Posterior vena cava (tissue), 2 donors: ENCODE measurements at regions of chr1 and their contacts with region 1.

Region 1: DNA sequence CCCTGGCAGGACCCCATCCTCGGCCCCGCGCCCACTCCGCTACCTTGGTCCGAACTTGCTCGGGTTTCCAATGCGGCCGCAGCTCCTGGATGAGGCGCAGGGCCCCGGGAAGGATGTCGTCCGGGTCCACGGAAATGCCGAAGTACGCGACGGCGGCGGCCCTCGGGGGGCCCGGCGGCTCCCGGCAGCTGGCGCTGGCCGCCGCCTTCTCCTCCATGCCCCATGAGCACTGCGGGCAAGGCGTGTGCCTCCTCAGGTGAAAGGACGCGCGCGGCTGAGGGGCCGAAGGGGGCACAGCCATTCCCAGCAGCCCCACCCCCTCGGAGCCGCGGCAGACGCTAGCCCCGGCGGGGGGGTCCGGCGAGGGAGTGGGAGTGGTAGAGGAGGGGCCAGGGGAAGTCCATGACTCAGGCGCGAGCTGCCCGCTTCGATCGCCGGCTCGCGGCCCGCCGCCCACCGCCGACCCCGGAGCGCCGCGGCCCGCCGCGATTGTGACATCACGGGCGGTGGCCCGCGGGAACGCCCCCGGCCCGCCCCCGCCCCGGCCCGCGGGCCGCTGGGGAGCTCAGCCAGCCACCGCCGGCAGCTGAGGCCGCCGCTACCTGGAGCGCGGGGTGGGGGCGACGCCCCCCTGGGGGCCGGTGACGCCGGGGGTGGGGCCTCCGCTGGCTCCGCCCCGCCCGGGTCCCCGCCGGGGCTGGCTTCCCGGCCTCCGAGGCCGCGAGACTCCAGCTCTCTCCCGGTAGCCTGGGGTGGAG is at the start of gene ETNK2:
- DNase-seq: peak; percentile 87
- total RNA-seq, gene ETNK2: 7.4 to 12.3 TPM

Region 2: GRCh38 chr1:203711251-203712007 is 440.3 kb before region 1 on chr1:
- intact Hi-C with region 1: no loop called
- DNase-seq: no peak

Region 3: DNA sequence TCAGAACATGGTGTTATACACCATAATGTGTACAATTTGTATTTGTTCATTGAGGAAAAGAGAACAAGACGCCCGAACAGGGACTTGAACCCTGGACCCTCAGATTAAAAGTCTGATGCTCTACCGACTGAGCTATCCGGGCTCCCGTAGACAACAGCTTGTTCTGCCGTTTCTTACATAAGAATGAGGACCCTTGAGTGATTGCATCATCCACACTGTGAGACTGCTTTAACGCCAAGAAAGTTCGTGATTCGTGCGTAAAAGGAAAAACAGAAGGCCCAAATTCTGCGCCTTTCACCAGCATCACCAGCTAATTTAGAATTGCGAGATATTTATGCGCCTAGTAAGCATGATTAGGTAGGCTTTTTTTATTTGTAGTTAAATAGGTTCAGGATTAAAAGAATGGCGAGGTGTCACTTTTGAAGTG is 355.2 kb after region 1 on chr1:
- intact Hi-C with region 1: loop called in 1 of 2 experiments (anchors 10 kb)
- DNase-seq: peak; percentile 89

Region 4: GRCh38 chr1:205449750-205450443 is 1298.2 kb after region 1 on chr1:
- intact Hi-C with region 1: loop called in 1 of 2 experiments (anchors 5 kb)
- DNase-seq: no peak